Spleen (tissue), 13 donors: ENCODE measurements at regions of chr1 and their contacts with region 1.

Region 1: GRCh38 chr1:6624710-6625583 is at the start of gene THAP3:
- DNase-seq: peak; percentile 98
- H3K4me3 ChIP-seq: peak within 1 kb of the TSS; percentile 69 to 96 (median 74)
- H3K27ac ChIP-seq: peak within 1 kb of the TSS; percentile 68 to 91 (median 84)
- H3K4me1 ChIP-seq: peaks cover 11 to 42% (median 33%) of the 10 kb centered on the region in 6 donors
- H3K27me3 ChIP-seq: no peaks in the 10 kb centered on the region
- CTCF ChIP-seq: peak in 8 of 11 experiments; percentile 7 to 66 (median 38)
- POLR2A ChIP-seq: peak in 1 of 3 donors; percentile 23
- total RNA-seq, gene THAP3: 13.0 to 27.1 (median 15.5) TPM

Region 2: DNA sequence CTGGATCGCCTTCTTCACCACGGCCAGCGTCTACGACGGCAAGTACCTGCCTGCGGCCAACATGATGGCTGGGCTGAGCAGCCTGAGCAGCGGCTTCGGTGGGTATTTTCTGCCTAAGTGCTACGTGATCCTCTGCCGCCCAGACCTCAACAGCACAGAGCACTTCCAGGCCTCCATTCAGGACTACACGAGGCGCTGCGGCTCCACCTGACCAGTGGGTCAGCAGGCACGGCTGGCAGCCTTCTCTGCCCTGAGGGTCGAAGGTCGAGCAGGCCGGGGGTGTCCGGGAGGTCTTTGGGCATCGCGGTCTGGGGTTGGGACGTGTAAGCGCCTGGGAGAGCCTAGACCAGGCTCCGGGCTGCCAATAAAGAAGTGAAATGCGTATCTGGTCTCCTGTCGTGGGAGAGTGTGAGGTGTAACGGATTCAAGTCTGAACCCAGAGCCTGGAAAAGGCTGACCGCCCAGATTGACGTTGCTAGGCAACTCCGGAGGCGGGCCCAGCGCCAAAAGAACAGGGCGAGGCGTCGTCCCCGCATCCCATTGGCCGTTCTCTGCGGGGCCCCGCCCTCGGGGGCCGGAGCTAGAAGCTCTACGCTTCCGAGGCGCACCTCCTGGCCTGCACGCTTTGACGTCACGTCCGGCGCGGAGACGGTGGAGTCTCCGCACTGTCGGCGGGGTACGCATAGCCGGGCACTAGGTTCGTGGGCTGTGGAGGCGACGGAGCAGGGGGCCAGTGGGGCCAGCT is 45.4 kb before region 1 on chr1 and contains the start of gene ZBTB48:
- intact Hi-C with region 1: loop called (anchors 10 kb)
- DNase-seq: peak; percentile 100
- H3K4me3 ChIP-seq: peak within 1 kb of the TSS; percentile 73 to 92 (median 88)
- H3K27ac ChIP-seq: peak within 1 kb of the TSS; percentile 86 to 98 (median 95)
- H3K4me1 ChIP-seq: peaks cover 18 to 57% (median 44%) of the 10 kb centered on the region in 6 donors
- H3K27me3 ChIP-seq: no peaks in the 10 kb centered on the region
- CTCF ChIP-seq: peak in 3 of 11 experiments; percentile 20 to 32 (median 22)
- POLR2A ChIP-seq: peak; percentile 47 to 90 (median 84)
- total RNA-seq, gene ZBTB48: 23.5 to 61.0 (median 48.0) TPM